ENCODE measurements at regions of chr2 and their contacts with region 1.

Region 1: DNA sequence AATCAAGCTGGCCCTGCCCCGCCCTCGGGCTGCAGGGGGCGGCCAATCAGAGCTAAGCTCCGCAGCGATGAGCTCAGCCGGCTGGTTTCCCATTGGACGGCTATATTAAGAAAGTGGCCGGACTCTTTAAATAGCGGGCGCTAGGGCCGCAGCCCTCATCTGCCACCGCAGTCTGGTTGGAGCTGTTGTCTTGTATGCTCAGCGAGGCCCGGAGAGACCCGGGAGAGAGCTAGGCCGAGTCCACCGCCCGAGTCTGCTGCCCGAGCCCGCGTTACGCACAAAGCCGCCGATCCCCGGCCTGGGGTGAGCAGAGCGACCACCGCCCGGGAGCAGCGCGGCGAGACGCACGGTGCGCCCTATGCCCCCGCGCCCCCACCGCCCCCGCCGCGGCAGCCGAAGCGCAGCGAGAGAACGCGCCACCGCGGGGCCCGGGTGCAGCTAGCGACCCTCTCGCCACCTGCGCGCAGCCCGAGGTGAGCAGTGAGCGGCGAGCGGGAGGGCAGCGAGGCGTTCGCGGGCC is at the start of gene RHOB:
- DNase-seq: peak; percentile 100
- H3K4me3 ChIP-seq: peak within 1 kb of the TSS; percentile 82 to 92
- H3K27ac ChIP-seq: peak within 1 kb of the TSS; percentile 82 to 96
- H3K4me1 ChIP-seq: peaks cover 32 to 47% of the 10 kb centered on the region in 2 experiments
- H3K27me3 ChIP-seq: no peaks in the 10 kb centered on the region
- CTCF ChIP-seq: no peak
- EP300 ChIP-seq: peak; percentile 37 to 66; a peak in 3 of 4 replicates
- RAD21 ChIP-seq: peak; percentile 46
- polyA plus RNA-seq, gene RHOB: 43.5 and 50.3 TPM in 2 replicates

Region 2: DNA sequence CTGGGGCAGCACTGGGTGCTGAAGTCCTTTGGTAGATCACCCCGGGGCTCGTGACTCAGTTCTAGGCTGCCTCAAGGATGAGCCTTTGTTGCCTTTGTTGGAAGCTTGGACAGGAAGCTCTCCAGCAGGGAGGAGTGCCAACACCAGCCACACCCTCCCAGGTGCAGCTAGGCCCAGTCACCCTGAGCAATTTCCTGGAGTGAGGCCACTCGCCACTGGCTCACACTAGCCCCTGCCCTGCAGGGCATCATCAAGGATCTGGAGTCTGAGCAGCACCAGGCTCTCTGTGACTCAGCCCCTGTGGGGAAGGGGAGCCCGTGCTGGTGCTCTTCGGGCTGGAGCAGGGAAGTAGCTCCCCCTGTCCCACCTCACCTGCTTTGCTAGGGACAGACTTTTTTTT is 215.3 kb before region 1 on chr2:
- CTCF ChIA-PET with region 1: no interaction called
- POLR2A ChIA-PET with region 1: no interaction called
- DNase-seq: peak; percentile 33
- H3K4me3 ChIP-seq: no peak overlapping the region
- H3K27ac ChIP-seq: no peak overlapping the region
- H3K4me1 ChIP-seq: no peaks in the 10 kb centered on the region; a peak in 2 of 4 replicates
- H3K27me3 ChIP-seq: no peaks in the 10 kb centered on the region
- CTCF ChIP-seq: no peak
- EP300 ChIP-seq: peak in 1 of 2 experiments; percentile 28; a peak in 1 of 4 replicates
- RAD21 ChIP-seq: no peak

Region 3: DNA sequence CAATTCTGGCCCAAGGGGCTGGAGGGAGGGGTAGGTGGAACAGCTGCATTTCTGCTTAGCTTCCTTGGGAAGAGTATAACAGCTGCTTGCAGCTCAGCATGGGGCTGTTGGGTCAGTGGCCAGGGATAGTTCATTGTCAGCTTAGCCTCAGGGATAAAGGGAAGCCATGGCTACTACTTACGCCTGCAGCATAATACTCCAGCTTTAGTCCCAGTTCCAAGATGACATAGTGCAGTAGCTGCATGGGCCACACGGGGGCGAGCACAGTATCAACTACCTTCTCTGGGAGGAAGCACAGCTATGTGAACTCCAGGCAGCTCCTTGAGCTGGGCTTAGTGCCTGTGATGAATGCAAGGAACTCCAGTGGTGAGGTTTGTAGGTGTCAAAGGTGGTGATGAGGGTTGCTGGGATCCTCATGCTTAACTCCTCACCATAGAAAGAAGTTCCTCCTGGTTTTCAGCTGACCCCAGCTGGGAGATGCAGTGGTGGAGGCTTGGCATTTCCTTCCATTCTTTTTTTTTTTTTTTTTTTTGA is 35.5 kb before region 1 on chr2:
- CTCF ChIA-PET with region 1: interaction called, 30 read pairs
- POLR2A ChIA-PET with region 1: interaction called, 10 read pairs
- DNase-seq: peak; percentile 77
- H3K4me3 ChIP-seq: no peak overlapping the region
- H3K27ac ChIP-seq: no peak overlapping the region
- H3K4me1 ChIP-seq: no peaks in the 10 kb centered on the region
- H3K27me3 ChIP-seq: peaks cover 9% of the 10 kb centered on the region; the same call in 1 of the 2 replicates
- CTCF ChIP-seq: peak; percentile 87
- EP300 ChIP-seq: no peak
- RAD21 ChIP-seq: peak; percentile 70

Region 4: GRCh38 chr2:20490260-20491181 is 43.5 kb after region 1 on chr2:
- CTCF ChIA-PET with region 1: interaction called, 10 read pairs
- POLR2A ChIA-PET with region 1: interaction called, 20 read pairs
- DNase-seq: no peak
- H3K4me3 ChIP-seq: no peak overlapping the region
- H3K27ac ChIP-seq: no peak overlapping the region
- H3K4me1 ChIP-seq: peaks cover 10 to 55% of the 10 kb centered on the region in 2 experiments
- H3K27me3 ChIP-seq: no peaks in the 10 kb centered on the region
- CTCF ChIP-seq: no peak
- EP300 ChIP-seq: no peak
- RAD21 ChIP-seq: no peak

Region 5: GRCh38 chr2:20551260-20551944 is 104.4 kb after region 1 on chr2:
- CTCF ChIA-PET with region 1: interaction called, 6 read pairs
- POLR2A ChIA-PET with region 1: interaction called, 19 read pairs
- DNase-seq: peak; percentile 80
- H3K4me3 ChIP-seq: no peak overlapping the region
- H3K27ac ChIP-seq: peak overlapping the region; percentile 16 to 80; a peak in 3 of 4 replicates
- H3K4me1 ChIP-seq: peaks cover 6 to 24% of the 10 kb centered on the region in 2 experiments; a peak in 3 of 4 replicates
- H3K27me3 ChIP-seq: no peaks in the 10 kb centered on the region
- CTCF ChIP-seq: no peak
- EP300 ChIP-seq: no peak
- RAD21 ChIP-seq: no peak

Region 6: GRCh38 chr2:20595431-20596192 is 148.6 kb after region 1 on chr2:
- CTCF ChIA-PET with region 1: interaction called, 16 read pairs
- POLR2A ChIA-PET with region 1: interaction called, 47 read pairs
- DNase-seq: no peak
- H3K4me3 ChIP-seq: no peak overlapping the region
- H3K27ac ChIP-seq: no peak overlapping the region; a peak in 1 of 4 replicates
- H3K4me1 ChIP-seq: peaks cover 18 to 28% of the 10 kb centered on the region in 2 experiments; a peak in 3 of 4 replicates
- H3K27me3 ChIP-seq: no peaks in the 10 kb centered on the region
- CTCF ChIP-seq: no peak
- EP300 ChIP-seq: no peak
- RAD21 ChIP-seq: no peak

Region 7: DNA sequence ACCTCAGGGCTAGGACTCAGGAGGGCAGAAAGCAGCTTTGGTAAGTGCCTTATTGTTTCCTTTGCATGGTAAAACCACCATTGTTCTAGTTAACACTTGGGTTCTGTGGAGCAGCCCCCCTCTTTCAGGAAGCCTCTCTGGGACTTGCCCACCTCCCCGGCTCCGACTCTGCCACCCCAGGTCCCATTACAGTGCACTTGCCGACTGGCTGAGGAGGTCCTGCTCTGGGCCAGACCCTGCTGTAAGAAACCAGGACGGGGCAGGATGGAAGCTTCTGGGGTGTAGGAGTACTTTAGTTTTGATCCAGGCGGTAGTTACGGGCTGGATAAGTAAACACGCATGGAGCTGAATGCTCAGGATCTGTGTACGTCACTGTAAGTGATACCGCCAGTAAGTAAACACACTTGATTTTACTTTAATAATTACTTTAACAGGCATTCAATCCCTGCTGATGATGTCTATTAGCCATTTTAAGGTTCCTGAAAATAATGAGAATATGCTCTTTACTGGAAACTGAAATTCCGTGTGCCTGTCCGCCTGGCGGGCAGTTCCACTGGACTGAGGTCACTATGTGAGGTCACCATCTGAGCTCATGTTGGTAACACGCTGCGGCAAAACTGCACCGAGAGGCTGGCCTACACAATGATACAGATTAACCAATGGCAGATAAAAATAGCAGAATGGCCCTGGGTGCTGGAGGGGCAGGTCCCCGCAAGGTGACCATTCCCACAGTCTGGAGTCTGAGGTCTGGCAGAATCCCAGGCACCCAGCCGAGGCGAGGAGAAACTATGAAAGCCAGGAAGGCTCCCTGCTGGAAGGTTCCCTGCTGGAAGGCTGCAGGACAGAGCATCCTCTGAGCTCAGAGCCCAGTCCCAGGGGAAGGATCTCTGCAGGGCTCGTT is 178.8 kb after region 1 on chr2:
- CTCF ChIA-PET with region 1: interaction called, 178 read pairs
- POLR2A ChIA-PET with region 1: interaction called, 23 read pairs
- DNase-seq: no peak
- H3K4me3 ChIP-seq: no peak overlapping the region
- H3K27ac ChIP-seq: 0 out of 4 replicates have a peak overlapping the region, but pooled peaks of 1 of the 2 experiments have one; percentile 43
- H3K4me1 ChIP-seq: peaks cover 0 to 37% of the 10 kb centered on the region in 2 experiments; a peak in 1 of 4 replicates
- H3K27me3 ChIP-seq: no peaks in the 10 kb centered on the region
- CTCF ChIP-seq: no peak
- EP300 ChIP-seq: no peak
- RAD21 ChIP-seq: no peak

Measured in SK-N-SH (cell line).